ENCODE measurements at regions of chr22 and their contacts with region 1.

Region 1: DNA sequence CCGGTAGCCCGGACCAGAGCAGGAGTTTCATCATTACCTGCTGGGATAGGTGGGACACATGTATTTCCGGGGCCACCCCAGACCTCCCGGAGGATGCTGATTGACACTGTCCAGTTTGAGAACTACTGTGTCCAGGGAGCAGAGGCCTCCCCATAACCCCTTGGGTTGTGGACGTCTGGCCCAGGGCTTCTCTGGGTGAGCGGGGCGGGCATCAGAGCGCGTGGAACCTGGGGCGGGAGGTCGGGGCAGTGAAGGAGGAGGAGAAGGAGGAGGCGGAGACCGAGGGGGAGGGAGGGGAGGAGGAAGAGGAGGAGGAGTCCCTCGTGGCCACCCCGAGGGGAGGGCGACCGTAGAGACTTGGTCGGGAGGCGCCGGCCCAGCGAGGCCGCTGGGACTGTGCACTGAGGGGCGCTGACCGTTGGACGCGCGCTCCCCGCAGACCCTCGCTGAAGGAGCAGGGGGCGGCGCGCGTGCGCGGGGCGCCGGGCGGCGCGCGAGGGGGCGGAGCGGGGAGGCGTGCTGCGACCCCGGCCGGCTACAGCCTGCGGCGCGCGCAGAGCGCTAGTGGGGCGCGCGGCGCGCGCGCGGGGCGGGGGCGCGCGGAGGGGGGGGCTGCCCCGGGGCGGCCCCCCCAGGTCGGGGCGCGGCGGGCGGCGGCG is at the start of gene GRK3:
- DNase-seq: peak; percentile 70
- H3K4me3 Mint-ChIP-seq: peak within 1 kb of the TSS; percentile 94
- H3K27ac Mint-ChIP-seq: peak within 1 kb of the TSS; percentile 88
- H3K4me1 Mint-ChIP-seq: peaks cover 65% of the 10 kb centered on the region
- H3K27me3 Mint-ChIP-seq: no peaks in the 10 kb centered on the region
- total RNA-seq, gene GRK3: 33.0 and 38.2 TPM in 2 replicates

Region 2: GRCh38 chr22:25447686-25448434 is 116.6 kb before region 1 on chr22:
- intact Hi-C with region 1: loop called (anchors 5 kb)
- DNase-seq: peak; percentile 83
- H3K4me3 Mint-ChIP-seq: peak overlapping the region; percentile 95
- H3K27ac Mint-ChIP-seq: peak overlapping the region; percentile 94
- H3K4me1 Mint-ChIP-seq: peaks cover 38% of the 10 kb centered on the region
- H3K27me3 Mint-ChIP-seq: no peaks in the 10 kb centered on the region

Region 3: GRCh38 chr22:25482868-25483639 is 81.4 kb before region 1 on chr22:
- intact Hi-C with region 1: loop called (anchors 1 kb)
- DNase-seq: no peak
- H3K4me3 Mint-ChIP-seq: no peak overlapping the region
- H3K27ac Mint-ChIP-seq: peak overlapping the region; percentile 80
- H3K4me1 Mint-ChIP-seq: peaks cover 48% of the 10 kb centered on the region
- H3K27me3 Mint-ChIP-seq: no peaks in the 10 kb centered on the region

Region 4: GRCh38 chr22:25623310-25623734 is 58.9 kb after region 1 on chr22:
- intact Hi-C with region 1: loop called (anchors 2 kb)
- DNase-seq: no peak
- H3K4me3 Mint-ChIP-seq: peak overlapping the region; percentile 23
- H3K27ac Mint-ChIP-seq: peak overlapping the region; percentile 54
- H3K4me1 Mint-ChIP-seq: peaks cover 63% of the 10 kb centered on the region
- H3K27me3 Mint-ChIP-seq: no peaks in the 10 kb centered on the region

Region 5: DNA sequence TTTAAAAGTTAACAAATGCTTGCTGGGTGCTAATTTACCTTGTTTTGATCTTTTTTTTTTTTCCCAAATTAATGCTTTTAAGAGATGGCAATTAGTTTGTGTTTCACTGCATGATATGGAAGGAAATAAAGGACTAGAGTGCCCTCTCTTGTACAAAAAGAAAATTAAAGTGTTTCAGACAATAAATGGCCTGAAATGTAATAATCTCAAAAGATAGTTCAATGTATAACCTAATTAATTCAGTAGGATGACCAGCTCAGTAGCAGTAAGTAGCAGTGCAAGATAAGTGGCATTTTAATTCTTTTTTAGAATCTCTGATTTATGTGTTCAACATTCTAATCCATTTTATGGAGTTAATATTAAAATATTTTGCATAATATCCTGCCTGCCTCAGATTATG is 137.6 kb after region 1 on chr22:
- intact Hi-C with region 1: loop called (anchors 2 kb)
- DNase-seq: no peak
- H3K4me3 Mint-ChIP-seq: peak overlapping the region; percentile 75
- H3K27ac Mint-ChIP-seq: peak overlapping the region; percentile 36
- H3K4me1 Mint-ChIP-seq: peaks cover 68% of the 10 kb centered on the region
- H3K27me3 Mint-ChIP-seq: no peaks in the 10 kb centered on the region